GM10248 (cell line): ENCODE measurements at regions of chr3 and their contacts with region 1.

Region 1: GRCh38 chr3:63945558-63946096 is 33.4 kb upstream of the SCAANT1 start:
- DNase-seq: no peak
- CTCF ChIP-seq: no peak

Region 2: GRCh38 chr3:63967675-63968611 is 22.3 kb after region 1 on chr3:
- CTCF ChIA-PET with region 1: interaction called, 37 read pairs
- POLR2A ChIA-PET with region 1: no interaction called
- DNase-seq: no peak
- CTCF ChIP-seq: no peak

Region 3: DNA sequence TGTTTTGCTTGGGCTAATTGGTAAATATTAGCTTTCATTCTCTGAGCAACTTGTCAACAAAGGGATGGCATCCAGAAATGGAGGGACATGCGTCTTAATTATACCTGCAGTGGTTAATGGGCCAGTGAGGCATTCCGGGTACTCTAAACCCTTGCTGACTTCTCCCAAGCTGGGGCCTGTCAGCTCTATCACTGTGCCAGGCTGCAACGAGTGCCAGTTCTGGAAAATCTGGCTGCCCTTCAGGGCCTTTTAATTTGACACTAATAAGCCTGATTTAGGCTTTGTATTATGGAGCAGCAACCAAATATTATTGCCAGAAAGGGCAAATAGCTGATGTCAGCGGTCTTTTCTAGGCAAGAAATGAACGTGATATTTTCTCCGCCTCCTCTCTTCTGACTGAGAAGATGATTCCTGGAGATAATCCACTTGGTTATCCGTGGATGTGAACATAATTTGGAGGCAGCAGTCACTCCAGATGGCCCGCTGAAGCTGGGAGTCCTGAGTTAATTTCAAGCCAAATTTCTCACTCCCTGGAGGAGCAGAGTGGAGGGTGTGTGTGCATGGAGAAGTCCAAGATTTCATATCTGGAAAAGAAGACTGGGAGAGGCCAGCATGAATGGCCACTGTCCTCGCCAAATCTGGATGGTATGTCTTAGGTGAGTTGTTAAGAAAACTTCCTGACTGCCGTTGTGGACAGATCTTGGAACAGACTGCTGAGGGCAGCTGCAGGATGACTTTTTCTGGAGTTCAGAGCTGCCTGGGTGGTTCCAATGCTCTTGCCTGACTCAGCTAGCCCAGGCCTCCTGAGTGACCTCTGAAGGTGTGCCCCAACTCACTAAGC is 122.1 kb after region 1 on chr3:
- CTCF ChIA-PET with region 1: no interaction called
- POLR2A ChIA-PET with region 1: no interaction called
- DNase-seq: no peak
- CTCF ChIP-seq: no peak